Activated CD4-positive, alpha-beta T cell treated with anti-CD3 and anti-CD28 coated beads for 36 hours (primary cell): ENCODE measurements at regions of chrX and their contacts with region 1.

Region 1: DNA sequence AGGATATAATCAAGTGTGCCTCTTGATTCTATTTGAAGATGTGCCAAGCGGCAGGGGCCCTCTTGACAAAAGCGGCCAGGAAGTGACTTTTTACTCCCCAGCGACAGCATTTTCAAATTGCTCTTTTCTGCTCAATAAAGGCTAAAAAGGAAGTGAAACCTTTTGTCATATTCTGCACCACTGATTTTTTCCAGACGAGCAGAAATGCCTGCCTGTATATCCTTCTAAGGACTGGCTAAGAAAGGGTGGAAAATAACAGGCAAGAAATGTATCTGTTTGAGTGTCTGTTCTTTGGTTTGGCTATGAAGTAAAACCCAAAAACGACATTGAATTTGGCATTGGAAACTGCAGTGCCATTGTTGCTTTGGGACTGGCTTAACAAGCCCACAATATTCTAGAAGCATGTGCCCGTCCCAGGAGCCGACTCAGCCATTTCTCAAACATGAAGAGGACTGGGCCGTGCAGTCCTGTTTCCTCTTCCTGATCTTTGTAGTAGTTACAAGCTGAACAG is 25.4 kb downstream of the TMSB4X start:
- DNase-seq: peak; percentile 61
- ATAC-seq: peak; percentile 38
- H3K4me3 Mint-ChIP-seq: peak overlapping the region; percentile 66
- H3K27ac Mint-ChIP-seq: peak overlapping the region; percentile 94
- H3K4me1 Mint-ChIP-seq: peaks cover 70% of the 10 kb centered on the region
- H3K27me3 Mint-ChIP-seq: no peaks in the 10 kb centered on the region

Region 2: GRCh38 chrX:12984629-12985319 is 15.6 kb before region 1 on chrX:
- CTCF ChIA-PET with region 1: interaction called, 12 read pairs
- POLR2A ChIA-PET with region 1: interaction called, 3 read pairs
- intact Hi-C with region 1: loop called (anchors 1 kb)
- DNase-seq: peak; percentile 65
- ATAC-seq: peak; percentile 84
- H3K4me3 Mint-ChIP-seq: peak overlapping the region; percentile 28
- H3K27ac Mint-ChIP-seq: peak overlapping the region; percentile 89
- H3K4me1 Mint-ChIP-seq: peaks cover 70% of the 10 kb centered on the region
- H3K27me3 Mint-ChIP-seq: no peaks in the 10 kb centered on the region

Region 3: DNA sequence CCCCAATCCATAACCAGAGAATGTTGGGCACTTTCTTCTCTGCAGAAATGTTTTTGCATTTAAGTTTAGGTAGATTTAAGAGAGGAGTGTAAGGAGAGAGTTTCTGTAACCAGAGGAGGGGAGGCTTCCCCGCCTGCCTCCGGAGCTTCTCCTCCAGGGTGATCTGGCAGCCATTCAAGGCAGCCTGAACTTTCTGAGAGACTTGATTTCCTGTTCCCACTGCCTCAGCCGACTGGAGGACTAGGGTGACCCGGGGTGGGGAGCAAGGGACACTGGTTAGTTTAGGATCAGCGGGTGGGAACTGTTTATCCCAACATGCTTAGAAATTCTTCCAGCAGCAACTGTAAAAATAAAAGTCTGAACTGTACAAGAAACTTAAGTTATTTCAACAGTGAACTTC is 29.0 kb after region 1 on chrX:
- CTCF ChIA-PET with region 1: interaction called, 3 read pairs
- POLR2A ChIA-PET with region 1: interaction called, 10 read pairs
- intact Hi-C with region 1: loop called in 1 of 2 experiments (anchors 1 kb)
- DNase-seq: no peak
- ATAC-seq: no peak
- H3K4me3 Mint-ChIP-seq: peak overlapping the region; percentile 24
- H3K27ac Mint-ChIP-seq: peak overlapping the region; percentile 82
- H3K4me1 Mint-ChIP-seq: peaks cover 75% of the 10 kb centered on the region
- H3K27me3 Mint-ChIP-seq: no peaks in the 10 kb centered on the region

Region 4: GRCh38 chrX:13051529-13052172 is 51.3 kb after region 1 on chrX:
- CTCF ChIA-PET with region 1: interaction called, 7 read pairs
- POLR2A ChIA-PET with region 1: interaction called, 3 read pairs
- intact Hi-C with region 1: loop called (anchors 1 to 2 kb)
- DNase-seq: no peak
- ATAC-seq: peak; percentile 81
- H3K4me3 Mint-ChIP-seq: no peak overlapping the region
- H3K27ac Mint-ChIP-seq: peak overlapping the region; percentile 90
- H3K4me1 Mint-ChIP-seq: peaks cover 83% of the 10 kb centered on the region
- H3K27me3 Mint-ChIP-seq: no peaks in the 10 kb centered on the region

Region 5: GRCh38 chrX:13078739-13079444 is 78.5 kb after region 1 on chrX:
- CTCF ChIA-PET with region 1: interaction called, 5 read pairs
- POLR2A ChIA-PET with region 1: interaction called, 9 read pairs
- intact Hi-C with region 1: loop called in 1 of 2 experiments (anchors 1 kb)
- DNase-seq: no peak
- ATAC-seq: no peak
- H3K4me3 Mint-ChIP-seq: peak overlapping the region; percentile 29
- H3K27ac Mint-ChIP-seq: peak overlapping the region; percentile 75
- H3K4me1 Mint-ChIP-seq: peaks cover 87% of the 10 kb centered on the region
- H3K27me3 Mint-ChIP-seq: no peaks in the 10 kb centered on the region

Region 6: DNA sequence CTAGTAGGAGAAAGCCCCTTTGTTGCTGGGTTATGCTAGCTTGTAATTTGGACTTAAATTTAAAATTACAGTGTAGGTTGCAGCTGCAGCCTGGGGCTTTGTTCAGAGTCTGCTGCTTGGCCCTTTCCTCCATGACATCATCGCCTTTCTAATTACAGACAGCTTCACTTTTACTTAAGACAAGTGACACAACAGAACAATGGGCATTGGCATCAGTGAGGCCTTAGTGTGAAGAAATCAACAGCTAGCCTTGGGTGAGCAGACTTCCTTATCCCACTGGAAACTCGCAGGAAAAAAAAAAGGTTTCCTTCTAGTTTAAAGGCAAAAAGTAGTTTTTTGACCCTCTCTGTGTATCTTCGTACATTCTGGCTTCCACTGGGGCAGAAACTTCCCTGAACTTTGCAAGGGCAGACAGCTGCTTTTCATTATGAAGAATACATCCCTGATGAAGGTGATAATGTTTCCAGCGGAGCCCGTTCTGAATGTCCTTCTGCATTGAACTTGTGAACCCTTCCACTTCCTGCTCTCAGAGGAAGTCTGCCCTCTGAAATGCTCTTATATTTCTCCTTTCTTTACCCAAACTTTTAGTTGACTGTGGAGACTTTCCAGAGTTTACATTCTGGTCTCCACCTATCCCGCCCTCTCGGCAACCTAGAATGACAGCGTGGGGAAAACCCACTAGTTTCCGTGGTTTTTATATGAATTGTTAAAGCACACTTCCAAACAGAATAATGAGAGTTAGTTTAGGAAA is 167.3 kb after region 1 on chrX:
- CTCF ChIA-PET with region 1: no interaction called
- POLR2A ChIA-PET with region 1: no interaction called
- intact Hi-C with region 1: loop called in 1 of 2 experiments (anchors 5 kb)
- DNase-seq: peak; percentile 35
- ATAC-seq: peak; percentile 72
- H3K4me3 Mint-ChIP-seq: peak overlapping the region; percentile 34
- H3K27ac Mint-ChIP-seq: peak overlapping the region; percentile 60
- H3K4me1 Mint-ChIP-seq: peaks cover 20% of the 10 kb centered on the region
- H3K27me3 Mint-ChIP-seq: no peaks in the 10 kb centered on the region